ENCODE measurements at regions of chr2 and their contacts with region 1.

Region 1: DNA sequence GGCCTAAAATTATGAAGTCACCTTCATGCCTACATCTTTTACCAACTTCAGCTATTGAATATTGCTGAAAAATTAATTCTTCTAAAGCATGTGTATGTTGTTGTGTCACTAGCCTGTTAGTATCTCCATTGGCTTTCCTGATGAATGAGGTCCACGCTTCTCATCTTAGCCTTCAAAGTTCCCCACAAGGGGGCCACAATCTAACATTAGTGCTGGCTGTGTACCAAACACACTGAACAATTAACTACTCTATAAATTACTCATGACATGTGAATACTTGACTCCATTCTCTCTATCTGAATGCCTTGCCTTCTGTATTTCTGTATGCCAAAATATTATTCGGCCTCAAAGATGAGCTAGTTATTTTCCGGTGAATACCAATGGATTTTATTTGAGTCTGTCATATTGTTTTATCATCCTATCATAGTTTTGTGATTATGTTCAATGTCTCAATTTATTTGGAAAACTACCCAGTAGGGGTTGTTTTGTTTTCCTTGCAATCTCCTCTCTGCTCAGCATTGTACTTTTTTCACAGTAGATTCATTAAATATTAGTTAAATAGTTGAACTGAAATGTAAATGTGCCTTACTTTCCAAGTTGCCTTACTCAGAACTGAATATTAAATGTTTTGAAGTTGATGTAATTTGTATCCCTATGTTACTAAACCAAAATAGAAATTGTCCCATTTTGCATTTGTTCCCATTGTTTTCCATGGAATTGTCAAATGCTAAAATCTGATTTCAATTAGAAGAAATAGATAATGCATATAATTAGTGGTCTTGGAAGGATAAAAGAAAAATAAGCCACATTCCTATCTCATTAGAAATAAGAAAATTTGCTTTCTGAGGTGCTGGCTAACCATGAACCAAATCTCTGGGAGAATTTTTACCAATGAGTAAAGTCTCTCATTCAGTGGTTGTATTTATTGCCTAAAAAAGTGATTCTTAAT is 208.4 kb upstream of the COL3A1 start:
- DNase-seq: peak; percentile 41
- ATAC-seq: peak; percentile 63
- H3K4me3 ChIP-seq: no peak overlapping the region
- H3K27ac ChIP-seq: no peak overlapping the region
- H3K4me1 ChIP-seq: no peaks in the 10 kb centered on the region
- H3K27me3 ChIP-seq: no peaks in the 10 kb centered on the region
- CTCF ChIP-seq: peak; percentile 40 to 61 (median 55); a peak in 5 of 6 replicates
- POLR2A ChIP-seq: no peak
- RAD21 ChIP-seq: peak; percentile 58

Region 2: DNA sequence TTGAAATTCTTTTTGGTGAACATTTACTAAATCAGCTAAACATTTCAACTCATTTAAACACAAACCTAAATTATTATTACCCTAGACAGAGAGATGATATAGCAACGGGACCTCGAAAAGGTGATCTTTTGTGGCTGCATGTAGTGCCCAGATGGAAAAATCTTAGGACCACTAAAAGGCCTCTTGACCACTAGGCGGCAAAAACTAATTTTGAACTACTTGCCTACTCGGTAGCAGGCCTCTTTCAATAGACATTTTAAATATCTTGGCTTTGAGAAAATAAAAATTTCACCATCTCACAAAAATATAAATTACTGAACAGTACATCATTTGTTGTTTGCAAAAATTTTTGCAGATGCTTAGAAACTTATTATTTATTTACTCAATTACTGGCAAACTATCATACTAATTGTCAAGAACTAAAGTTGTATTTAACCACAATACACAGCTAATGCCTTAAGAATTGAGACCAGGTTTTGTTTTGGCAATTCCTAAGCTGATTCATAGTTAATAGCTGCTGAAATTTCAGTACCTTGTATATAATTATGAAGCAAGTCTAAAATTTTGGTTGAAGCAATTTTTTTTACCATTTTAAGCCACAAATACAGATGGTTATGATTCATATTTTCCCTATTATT is 217.8 kb after region 1 on chr2:
- CTCF ChIA-PET with region 1: interaction called, 5 read pairs
- POLR2A ChIA-PET with region 1: no interaction called
- RAD21 ChIA-PET with region 1: no interaction called
- intact Hi-C with region 1: loop called (anchors 5 kb)
- DNase-seq: peak; percentile 34
- ATAC-seq: peak; percentile 63
- H3K4me3 ChIP-seq: no peak overlapping the region
- H3K27ac ChIP-seq: no peak overlapping the region
- H3K4me1 ChIP-seq: peaks cover 0 to 7% of the 10 kb centered on the region in 2 experiments; a peak in 1 of 4 replicates
- H3K27me3 ChIP-seq: no peaks in the 10 kb centered on the region
- CTCF ChIP-seq: peak; percentile 10 to 59 (median 44); a peak in 3 of 6 replicates
- POLR2A ChIP-seq: no peak
- RAD21 ChIP-seq: 0 out of 2 replicates have a peak, but pooled peaks have one; percentile 23